HEK293 (cell line): ENCODE measurements at regions of chr6 and their contacts with region 1.

Region 1: GRCh38 chr6:116287689-116288282 is 8.1 kb upstream of the TSPYL1 start:
- H3K4me3 ChIP-seq: no peak overlapping the region
- H3K27ac ChIP-seq: no peak overlapping the region
- H3K4me1 ChIP-seq: no peaks in the 10 kb centered on the region
- CTCF ChIP-seq: peak; percentile 24; the same call in 1 of the 2 replicates

Region 2: DNA sequence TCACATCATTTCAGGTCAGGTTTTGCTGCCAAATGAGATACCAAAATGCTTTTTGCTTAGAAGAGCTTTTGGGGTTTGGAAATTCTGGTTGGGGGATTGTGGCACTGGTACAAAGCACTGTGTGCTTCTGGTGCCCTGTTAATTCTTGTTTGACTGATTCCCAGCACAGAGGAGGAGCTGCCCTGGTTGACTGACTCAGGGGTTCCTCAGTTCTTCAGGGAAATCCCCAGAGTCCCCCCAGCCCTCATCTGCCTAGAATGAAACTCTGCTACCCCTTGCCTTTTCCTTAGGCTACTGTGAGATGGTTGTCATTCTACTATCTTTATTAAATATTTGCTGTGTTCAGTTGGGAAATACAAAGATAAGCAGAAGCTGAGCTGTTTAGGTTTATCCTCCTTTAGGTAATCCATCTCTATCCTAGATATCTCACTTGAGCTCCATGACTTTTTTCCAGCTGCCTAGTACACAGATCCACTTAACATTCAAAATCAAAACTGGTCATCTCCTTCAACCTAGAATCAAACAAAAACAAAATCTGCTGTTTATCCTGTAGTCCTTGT is 16.8 kb after region 1 on chr6:
- CTCF ChIA-PET with region 1: interaction called, 12 read pairs
- POLR2A ChIA-PET with region 1: no interaction called
- H3K4me3 ChIP-seq: no peak overlapping the region
- H3K27ac ChIP-seq: no peak overlapping the region
- H3K4me1 ChIP-seq: no peaks in the 10 kb centered on the region
- CTCF ChIP-seq: no peak

Region 3: GRCh38 chr6:116371120-116371917 is 83.5 kb after region 1 on chr6:
- CTCF ChIA-PET with region 1: interaction called, 20 read pairs
- POLR2A ChIA-PET with region 1: interaction called, 5 read pairs
- H3K4me3 ChIP-seq: peak overlapping the region; percentile 87
- H3K27ac ChIP-seq: peak overlapping the region; percentile 96
- H3K4me1 ChIP-seq: peaks cover 3% of the 10 kb centered on the region; the same call in 1 of the 2 replicates
- CTCF ChIP-seq: peak; percentile 48

Region 4: DNA sequence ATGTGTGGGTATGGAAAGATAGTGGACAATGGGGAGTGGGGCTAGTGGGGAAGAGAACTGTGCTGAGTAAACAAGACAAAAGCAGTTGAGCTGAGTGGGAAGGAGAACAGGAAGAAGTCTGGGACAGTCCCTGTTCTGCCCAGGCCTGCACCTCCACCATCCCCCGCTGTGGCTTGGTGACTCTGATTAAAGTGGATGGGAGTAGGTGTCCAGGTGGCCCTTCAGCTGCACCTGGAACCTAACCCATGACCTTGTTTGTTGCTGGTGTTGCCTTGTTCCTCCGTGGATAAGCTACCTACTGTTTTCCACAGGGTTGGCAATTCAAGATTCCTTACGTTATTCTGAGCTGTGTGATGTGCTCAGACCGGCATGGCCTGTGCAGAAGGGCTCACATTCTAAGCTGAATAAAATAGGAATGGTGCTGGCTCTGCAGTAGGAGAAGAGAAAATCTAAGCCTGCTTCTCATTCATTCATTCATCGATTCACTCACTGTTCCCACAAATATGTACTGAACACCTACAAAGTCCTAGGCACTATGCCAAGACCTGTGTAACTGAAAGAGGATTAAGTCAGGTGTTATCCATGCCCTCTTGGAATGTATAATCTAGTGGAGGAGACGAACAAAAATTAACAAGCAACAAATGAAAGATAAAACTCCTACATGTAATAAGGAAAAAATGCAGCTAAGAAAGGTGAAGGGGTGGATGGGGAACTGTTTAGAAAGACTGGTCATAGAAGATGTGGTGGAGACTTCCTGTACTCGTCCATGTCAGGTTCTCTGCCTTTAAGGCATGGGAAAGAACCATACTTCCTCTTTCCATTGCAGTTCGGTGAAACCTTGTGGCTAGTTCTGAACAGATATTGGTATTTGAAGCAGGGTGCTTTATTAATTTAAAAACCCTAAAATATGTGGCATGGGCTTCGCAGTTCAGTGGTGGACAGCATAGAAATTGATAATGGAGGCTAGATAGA is 163.3 kb after region 1 on chr6:
- CTCF ChIA-PET with region 1: interaction called, 47 read pairs
- POLR2A ChIA-PET with region 1: no interaction called
- H3K4me3 ChIP-seq: no peak overlapping the region
- H3K27ac ChIP-seq: no peak overlapping the region
- H3K4me1 ChIP-seq: peaks cover 14% of the 10 kb centered on the region
- CTCF ChIP-seq: no peak

Region 5: DNA sequence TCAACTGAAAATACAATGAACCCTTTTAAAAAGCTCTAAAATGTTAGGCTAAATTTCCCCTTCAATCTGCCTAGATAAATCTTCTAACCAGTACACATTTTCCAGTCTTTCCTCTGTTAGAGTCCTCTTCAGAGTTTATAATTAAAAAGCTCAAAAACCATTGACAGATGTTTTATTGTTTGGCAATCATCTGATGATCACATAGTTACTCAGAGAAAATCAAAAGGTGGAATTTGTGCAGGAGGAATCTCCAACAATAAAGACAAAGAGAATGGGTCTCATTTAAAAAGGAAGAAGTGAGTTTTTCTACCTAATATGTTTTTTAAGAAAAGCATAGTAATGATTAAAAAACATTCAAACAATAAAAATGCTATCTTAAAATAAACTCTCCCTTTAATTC is 254.6 kb after region 1 on chr6:
- CTCF ChIA-PET with region 1: interaction called, 17 read pairs
- POLR2A ChIA-PET with region 1: no interaction called
- H3K4me3 ChIP-seq: no peak overlapping the region
- H3K27ac ChIP-seq: no peak overlapping the region
- H3K4me1 ChIP-seq: no peaks in the 10 kb centered on the region
- CTCF ChIP-seq: no peak

Region 6: DNA sequence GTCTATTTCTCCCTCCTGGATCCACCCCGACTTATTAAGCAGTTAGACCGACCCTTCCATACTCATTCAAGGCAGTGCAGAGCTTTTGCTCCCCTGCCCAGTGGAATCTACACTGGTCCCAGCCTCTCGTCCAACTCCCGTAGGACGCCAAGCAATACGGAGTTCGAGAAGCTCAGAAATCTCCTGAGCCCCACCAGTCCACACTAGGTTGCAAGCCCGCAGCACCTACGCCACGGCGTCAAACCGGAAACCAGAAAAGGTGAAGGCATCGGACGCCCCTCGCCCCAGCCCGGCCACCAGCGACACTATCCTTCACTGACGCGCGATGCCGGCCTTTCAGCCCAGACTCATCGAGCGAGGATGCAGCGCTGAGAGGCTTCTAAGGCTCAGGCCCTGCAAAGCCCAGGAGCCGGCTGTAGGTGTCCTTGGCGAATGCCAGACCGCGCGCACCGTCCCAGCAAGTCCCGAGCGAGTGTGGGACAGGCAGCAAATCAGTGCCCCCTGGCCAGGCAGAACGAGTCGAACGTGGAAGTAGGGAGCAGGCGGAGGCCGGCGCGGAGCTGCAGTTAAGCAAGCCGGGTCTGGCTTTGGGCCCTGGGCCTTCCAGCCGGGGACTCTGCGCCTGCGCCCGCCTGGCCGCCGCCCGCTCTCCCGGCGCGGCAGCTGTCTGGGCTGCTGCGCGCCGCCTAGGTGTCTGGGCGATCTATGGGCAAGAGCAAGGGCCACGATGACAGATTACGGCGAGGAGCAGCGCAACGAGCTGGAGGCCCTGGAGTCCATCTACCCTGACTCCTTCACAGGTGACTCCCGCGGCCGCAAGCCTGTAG is 283.3 kb after region 1 on chr6 and contains the start of gene RWDD1:
- CTCF ChIA-PET with region 1: interaction called, 42 read pairs
- POLR2A ChIA-PET with region 1: interaction called, 4 read pairs
- H3K4me3 ChIP-seq: peak within 1 kb of the TSS; percentile 96
- H3K27ac ChIP-seq: peak within 1 kb of the TSS; percentile 85
- H3K4me1 ChIP-seq: peaks cover 2% of the 10 kb centered on the region; the same call in 1 of the 2 replicates
- CTCF ChIP-seq: peak; percentile 40; the same call in 1 of the 2 replicates